ENCODE measurements at regions of chr5 and their contacts with region 1.

Region 1: DNA sequence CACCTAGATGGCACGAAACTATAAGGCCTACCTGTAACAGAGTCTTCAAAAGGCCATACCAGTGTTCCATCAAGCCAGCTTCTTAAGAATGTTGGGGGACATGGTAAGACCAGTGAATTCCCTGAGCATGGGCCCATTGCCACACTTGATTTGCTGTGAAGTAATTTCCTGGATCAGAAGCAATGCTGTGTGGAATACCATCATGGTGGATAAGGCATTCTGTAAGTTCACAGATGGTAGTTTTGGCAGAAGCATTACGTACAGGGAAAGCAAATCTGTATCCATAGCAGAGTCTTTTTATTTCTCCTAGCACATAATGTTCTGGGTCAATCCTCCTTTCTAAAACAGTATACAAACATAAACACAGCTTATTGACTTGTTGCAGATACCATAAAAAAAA is 89.1 kb upstream of the MAST4 start:
- DNase-seq: no peak
- H3K4me3 ChIP-seq: no peak overlapping the region
- H3K27ac ChIP-seq: no peak overlapping the region
- H3K4me1 ChIP-seq: no peaks in the 10 kb centered on the region
- H3K27me3 ChIP-seq: no peaks in the 10 kb centered on the region
- CTCF ChIP-seq: no peak
- POLR2A ChIP-seq: no peak

Region 2: GRCh38 chr5:66561256-66561990 is 54.3 kb after region 1 on chr5:
- intact Hi-C with region 1: loop called (anchors 2 kb)
- DNase-seq: no peak
- H3K4me3 ChIP-seq: no peak overlapping the region
- H3K27ac ChIP-seq: no peak overlapping the region
- H3K4me1 ChIP-seq: no peaks in the 10 kb centered on the region
- H3K27me3 ChIP-seq: no peaks in the 10 kb centered on the region
- CTCF ChIP-seq: no peak
- POLR2A ChIP-seq: no peak

Region 3: DNA sequence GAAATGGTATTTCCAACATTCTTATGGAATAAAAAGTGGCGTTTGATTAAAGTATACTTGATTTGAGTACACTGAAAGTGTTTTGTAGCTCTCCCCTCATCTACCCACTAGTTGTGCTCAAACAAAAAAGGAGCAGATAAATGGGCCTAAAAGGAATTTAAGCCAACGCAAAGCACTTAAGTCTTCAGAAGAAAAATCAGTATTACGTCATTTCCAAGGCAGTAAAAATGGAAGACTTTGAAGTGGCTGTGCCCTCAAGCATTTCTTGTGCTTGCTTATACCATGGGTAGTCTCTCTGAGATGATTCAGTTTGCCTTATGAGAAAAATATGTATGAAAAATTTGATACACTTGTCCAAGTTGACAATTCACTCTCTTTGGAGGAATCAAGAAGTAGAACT is 969.4 kb after region 1 on chr5:
- intact Hi-C with region 1: no loop called
- DNase-seq: peak in 1 of 2 donors; percentile 21
- H3K4me3 ChIP-seq: no peak overlapping the region
- H3K27ac ChIP-seq: no peak overlapping the region
- H3K4me1 ChIP-seq: no peaks in the 10 kb centered on the region
- H3K27me3 ChIP-seq: no peaks in the 10 kb centered on the region
- CTCF ChIP-seq: no peak
- POLR2A ChIP-seq: no peak

Measured in breast epithelium (tissue), 4 donors.